ENCODE measurements at regions of chr5 and their contacts with region 1.

Region 1: DNA sequence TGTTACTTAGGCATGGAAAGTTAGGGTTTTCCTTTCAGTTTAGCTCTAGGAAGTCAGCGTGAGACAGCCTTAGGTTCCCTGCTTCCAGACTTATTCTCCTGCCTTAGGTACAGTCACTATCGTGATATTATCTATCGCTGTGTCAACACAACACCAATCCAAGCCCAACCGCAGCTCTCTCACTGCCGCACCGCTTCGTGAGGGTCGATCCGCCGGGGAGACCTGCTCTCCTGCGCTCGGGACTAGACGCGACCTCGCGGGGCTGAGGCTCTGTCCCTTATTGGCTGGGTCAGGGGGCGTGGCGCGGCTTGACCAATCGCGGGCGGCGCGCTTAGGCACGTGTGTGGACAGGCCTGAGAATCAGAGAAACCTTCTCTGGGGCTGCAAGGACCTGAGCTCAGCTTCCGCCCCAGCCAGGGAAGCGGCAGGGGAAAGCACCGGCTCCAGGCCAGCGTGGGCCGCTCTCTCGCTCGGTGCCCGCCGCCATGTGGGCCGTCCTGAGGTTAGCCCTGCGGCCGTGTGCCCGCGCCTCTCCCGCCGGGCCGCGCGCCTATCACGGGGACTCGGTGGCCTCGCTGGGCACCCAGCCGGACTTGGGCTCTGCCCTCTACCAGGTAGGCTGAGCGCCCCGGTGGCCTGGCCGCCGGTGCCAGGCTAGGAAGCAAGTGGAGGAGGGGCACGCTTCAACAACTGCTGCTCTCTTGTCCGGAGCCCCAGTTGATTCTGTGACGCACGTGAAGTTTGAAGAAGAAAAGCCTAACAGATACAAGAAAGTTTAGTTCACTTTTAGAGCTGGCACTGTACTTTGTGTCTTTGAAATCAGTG is at the start of gene MCCC2:
- DNase-seq: peak; percentile 98
- H3K4me3 Mint-ChIP-seq: peak within 1 kb of the TSS; percentile 77
- H3K27ac Mint-ChIP-seq: peak within 1 kb of the TSS; percentile 90
- H3K4me1 Mint-ChIP-seq: peaks cover 14% of the 10 kb centered on the region
- H3K27me3 Mint-ChIP-seq: no peaks in the 10 kb centered on the region
- CTCF ChIP-seq: no peak
- total RNA-seq, gene MCCC2: 33.8 and 51.1 TPM in 2 replicates

Region 2: DNA sequence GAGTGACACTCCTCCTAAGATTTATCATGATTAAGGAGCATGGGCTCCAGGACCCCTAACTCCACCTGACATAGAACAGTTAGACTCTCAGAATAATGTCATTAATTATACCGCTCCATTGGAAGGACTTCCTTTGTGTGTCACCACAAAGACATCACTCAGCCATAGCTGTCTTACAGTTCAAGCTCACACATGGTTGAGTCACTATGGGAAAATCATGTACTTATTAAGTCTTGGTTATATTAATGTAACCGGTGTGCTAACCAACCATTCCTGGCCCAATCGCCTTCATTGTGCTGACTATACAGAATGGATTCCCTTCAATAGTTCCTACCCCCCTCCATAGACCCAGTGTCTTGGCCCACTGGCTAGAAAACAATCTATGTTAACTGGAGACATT is 10.9 kb before region 1 on chr5:
- CTCF ChIA-PET with region 1: interaction called, 3 read pairs
- POLR2A ChIA-PET with region 1: interaction called, 12 read pairs
- intact Hi-C with region 1: no loop called
- DNase-seq: no peak
- H3K4me3 Mint-ChIP-seq: no peak overlapping the region
- H3K27ac Mint-ChIP-seq: no peak overlapping the region
- H3K4me1 Mint-ChIP-seq: no peaks in the 10 kb centered on the region
- H3K27me3 Mint-ChIP-seq: no peaks in the 10 kb centered on the region
- CTCF ChIP-seq: no peak

Region 3: DNA sequence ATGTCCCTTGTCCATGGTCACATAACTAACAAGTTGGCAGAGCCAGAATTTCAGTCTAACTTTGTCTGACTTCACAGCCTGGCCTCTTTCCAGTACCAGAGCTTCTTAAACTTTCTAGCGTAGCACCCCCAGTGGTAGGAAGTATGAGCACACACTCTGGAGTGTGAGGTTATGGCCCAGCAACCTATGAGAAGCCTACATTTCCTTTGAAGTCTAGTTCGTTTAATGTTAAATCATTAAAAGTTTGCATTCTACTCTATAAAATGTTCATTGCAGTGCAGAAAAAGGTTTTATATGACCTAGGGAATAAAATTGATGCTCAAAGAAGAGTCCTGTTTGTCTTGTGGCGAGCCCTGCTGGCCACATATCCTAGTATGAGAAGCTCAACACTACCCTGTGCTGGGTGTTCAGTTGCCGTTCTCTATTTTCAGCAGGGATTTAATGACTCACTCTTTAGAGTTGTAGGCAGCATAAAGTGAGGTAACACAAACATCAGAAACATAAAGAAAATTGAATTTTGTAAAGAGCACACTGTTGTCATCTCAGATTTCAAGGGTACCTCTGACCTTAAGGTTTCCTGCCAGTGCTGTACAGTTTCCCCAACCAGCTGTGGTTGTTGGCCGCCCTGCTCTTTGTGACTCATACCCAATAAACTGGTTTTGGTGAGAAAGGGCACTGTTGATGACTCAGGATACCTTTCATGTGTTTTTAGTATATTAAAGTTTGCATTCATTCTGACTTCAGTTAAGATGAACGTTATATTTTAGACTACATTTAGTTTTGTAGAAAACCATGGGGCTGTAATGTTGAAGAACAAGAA is 14.3 kb after region 1 on chr5:
- CTCF ChIA-PET with region 1: interaction called, 6 read pairs
- POLR2A ChIA-PET with region 1: interaction called, 28 read pairs
- intact Hi-C with region 1: no loop called
- DNase-seq: peak; percentile 98
- H3K4me3 Mint-ChIP-seq: no peak overlapping the region
- H3K27ac Mint-ChIP-seq: peak overlapping the region; percentile 69
- H3K4me1 Mint-ChIP-seq: peaks cover 23% of the 10 kb centered on the region
- H3K27me3 Mint-ChIP-seq: no peaks in the 10 kb centered on the region
- CTCF ChIP-seq: peak; percentile 48

Region 4: DNA sequence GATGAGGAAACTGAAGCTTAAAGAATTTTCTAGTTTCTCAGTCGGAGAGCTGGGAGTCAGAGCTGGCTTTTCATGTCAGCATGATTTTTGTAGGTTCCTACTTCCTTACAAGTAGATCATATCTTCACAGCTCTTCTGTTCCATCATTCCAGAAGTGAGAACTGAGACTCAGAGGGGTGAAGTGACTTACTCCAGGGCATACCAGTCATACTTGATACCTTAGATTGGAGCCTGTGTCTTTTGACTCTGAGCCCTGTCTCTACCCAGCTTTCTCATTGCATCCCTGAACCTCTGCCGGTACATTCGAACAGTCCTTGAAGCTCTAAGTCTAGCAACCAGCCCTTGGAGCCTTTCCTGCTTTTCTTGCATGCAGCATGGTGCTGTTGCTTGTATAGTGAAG is 53.3 kb after region 1 on chr5:
- CTCF ChIA-PET with region 1: no interaction called
- POLR2A ChIA-PET with region 1: no interaction called
- intact Hi-C with region 1: no loop called
- DNase-seq: no peak
- H3K4me3 Mint-ChIP-seq: no peak overlapping the region
- H3K27ac Mint-ChIP-seq: no peak overlapping the region
- H3K4me1 Mint-ChIP-seq: no peaks in the 10 kb centered on the region
- H3K27me3 Mint-ChIP-seq: no peaks in the 10 kb centered on the region
- CTCF ChIP-seq: no peak

Measured in MCF 10A (cell line).